Activated T-helper 2 cell treated with anti-CD3 and anti-CD28 coated beads, Interferon-gamma antibody, Interleukin-2, Interleukin-4, amounts not matched to agents 10 μg/mL and 5 μg/mL and 100 μg/mL, durations not matched to agents 14 hours and 24 hours and 36 hours (primary cell): ENCODE measurements at regions of chr11 and their contacts with region 1.

Region 1: GRCh38 chr11:103682318-103683184 is 353.9 kb upstream of the DDI1 start:
- DNase-seq: peak; percentile 30
- H3K4me3 Mint-ChIP-seq: no peak overlapping the region
- H3K27ac Mint-ChIP-seq: no peak overlapping the region
- H3K4me1 Mint-ChIP-seq: peaks cover 2% of the 10 kb centered on the region
- H3K27me3 Mint-ChIP-seq: no peaks in the 10 kb centered on the region

Region 2: DNA sequence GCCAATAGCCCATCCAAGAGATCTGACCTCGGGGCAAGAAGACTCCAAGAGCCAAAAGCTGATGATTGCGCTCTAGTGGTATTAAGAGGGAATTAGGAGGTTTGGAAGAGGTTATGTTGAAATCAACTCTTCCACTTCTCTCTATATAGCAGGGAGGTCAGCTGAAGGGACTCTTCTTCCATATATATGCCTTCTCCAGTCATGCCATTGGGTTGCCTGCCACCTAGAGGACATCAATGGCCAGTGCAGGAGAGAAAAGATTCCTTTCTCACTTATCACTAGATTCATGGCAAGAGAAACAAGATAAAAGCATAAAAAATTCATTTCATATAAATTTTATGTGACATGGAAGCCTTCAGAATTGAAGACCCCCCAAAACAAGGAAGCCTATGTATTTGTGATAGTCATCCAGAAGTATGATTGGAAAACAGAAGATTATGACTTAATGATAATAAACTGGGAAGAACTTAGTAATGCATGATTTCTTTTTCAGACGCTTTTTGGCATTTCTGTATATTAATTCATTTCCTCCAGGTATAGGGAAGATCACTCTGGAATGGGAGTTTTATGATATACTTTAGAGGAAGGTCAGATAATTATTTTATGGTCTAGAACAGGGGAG is 81.2 kb before region 1 on chr11:
- intact Hi-C with region 1: no loop called
- DNase-seq: no peak
- H3K4me3 Mint-ChIP-seq: no peak overlapping the region
- H3K27ac Mint-ChIP-seq: no peak overlapping the region
- H3K4me1 Mint-ChIP-seq: no peaks in the 10 kb centered on the region
- H3K27me3 Mint-ChIP-seq: no peaks in the 10 kb centered on the region

Region 3: GRCh38 chr11:104151404-104152204 is 469.1 kb after region 1 on chr11:
- intact Hi-C with region 1: loop called (anchors 5 kb)
- DNase-seq: no peak
- H3K4me3 Mint-ChIP-seq: no peak overlapping the region
- H3K27ac Mint-ChIP-seq: no peak overlapping the region
- H3K4me1 Mint-ChIP-seq: no peaks in the 10 kb centered on the region
- H3K27me3 Mint-ChIP-seq: no peaks in the 10 kb centered on the region

Region 4: DNA sequence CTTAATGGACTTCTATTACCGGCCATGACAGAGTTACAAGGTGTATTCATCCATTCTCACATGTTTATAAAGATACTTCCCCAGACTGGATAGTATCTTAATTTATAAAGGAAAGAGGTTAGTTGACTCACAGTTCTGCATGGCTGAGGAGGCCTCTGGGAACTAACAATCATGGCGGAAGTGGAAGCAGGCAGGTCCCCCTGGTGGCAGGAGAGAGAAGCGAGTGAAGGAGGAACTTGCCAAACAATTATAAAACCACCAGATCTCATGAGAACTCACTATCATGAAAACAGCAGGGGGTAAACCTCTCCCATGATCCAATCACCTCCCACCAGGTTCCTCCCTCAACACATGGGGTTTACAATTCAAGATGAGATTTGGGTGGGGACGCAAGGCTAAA is 651.4 kb after region 1 on chr11:
- intact Hi-C with region 1: loop called (anchors 5 kb)
- DNase-seq: no peak
- H3K4me3 Mint-ChIP-seq: no peak overlapping the region
- H3K27ac Mint-ChIP-seq: no peak overlapping the region
- H3K4me1 Mint-ChIP-seq: no peaks in the 10 kb centered on the region
- H3K27me3 Mint-ChIP-seq: no peaks in the 10 kb centered on the region